Right cardiac atrium (tissue), 5 donors: ENCODE measurements at regions of chr9 and their contacts with region 1.

Region 1: DNA sequence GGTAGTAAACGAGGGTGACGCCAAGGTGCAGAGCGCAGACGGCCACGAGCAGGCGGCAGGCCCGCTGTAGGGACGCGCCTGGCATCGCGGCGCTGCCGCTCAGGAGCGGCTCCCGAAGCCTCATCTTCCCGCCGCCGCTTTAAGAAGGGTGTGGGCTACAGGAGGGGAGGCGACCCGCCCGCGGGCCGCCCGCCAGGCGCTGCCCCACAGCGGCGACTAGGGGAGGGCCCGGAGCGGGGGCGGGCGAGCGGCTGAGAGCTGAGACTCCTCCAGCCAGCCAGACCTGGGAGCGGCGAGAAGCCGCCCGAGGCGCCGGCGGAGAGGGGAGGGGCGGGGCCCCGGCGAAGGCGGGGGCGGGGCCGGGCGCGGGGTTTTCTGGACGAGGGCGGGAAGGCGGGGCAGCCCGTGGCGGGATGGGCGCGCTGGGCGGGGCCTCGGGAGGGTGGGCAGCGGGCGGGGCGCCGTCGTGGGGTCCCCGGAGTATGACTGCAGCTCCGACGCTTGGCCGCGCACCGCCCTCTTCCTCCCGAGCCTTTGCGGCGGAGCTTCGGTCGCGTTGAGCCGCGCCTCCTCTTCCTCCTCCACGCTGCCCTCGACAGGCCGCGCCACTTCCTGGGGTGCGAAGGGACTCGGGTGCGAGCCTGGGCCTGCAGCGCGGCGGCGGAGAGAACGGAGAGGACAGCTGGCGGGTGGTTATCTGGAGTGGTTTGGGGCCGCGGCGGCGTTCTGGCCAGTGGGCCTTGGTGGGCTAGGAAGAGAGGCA is at the start of gene B4GALT1:
- DNase-seq: peak; percentile 97 to 99 (median 98)
- ATAC-seq: peak; percentile 86 to 88
- H3K4me3 ChIP-seq: peak within 1 kb of the TSS; percentile 87
- H3K27ac ChIP-seq: peak within 1 kb of the TSS; percentile 99
- H3K4me1 ChIP-seq: peaks cover 25% of the 10 kb centered on the region
- H3K27me3 ChIP-seq: no peaks in the 10 kb centered on the region
- total RNA-seq, gene B4GALT1: 44.0 to 137 (median 58.3) TPM

Region 2: DNA sequence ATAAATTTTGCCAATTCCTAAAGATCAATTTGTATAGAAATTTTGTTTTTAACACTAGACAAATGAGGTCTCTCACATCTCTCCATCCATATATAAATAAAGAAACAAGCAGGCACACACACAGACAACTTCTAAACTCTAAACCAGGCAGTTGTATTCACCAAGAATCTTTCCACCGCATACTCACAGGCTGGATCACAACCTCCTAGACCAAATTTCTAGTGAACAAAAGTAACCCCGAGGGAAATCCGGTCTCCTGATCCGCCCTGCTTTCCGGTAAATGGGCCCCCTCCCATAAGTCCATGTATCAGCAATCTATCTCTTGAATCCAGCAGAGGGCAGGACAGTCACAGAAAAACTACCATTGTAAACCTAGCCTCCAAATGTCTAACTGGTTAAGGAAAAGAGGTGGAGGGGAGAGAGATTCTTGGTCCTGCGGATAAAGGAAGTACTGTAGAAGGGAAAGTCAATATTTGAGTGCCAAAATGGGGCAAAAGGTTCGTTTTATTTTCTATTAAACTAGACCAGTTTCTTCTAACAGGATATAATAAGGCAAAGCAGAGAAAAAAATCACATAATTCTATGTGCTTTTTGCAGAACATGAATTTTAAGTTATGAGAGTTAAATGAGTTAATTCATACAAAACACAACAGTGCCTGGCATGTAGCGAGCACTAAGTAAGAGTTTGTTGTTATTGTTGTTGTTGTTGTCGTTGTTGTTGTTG is 85.9 kb before region 1 on chr9:
- intact Hi-C with region 1: loop called in 2 of 4 experiments (anchors 5 kb)
- DNase-seq: peak in 2 of 3 donors; percentile 64 to 78
- ATAC-seq: peak; percentile 72 to 78
- H3K4me3 ChIP-seq: no peak overlapping the region
- H3K27ac ChIP-seq: no peak overlapping the region
- H3K4me1 ChIP-seq: no peaks in the 10 kb centered on the region
- H3K27me3 ChIP-seq: no peaks in the 10 kb centered on the region

Region 3: GRCh38 chr9:33107735-33108134 is 59.5 kb before region 1 on chr9:
- intact Hi-C with region 1: loop called in 1 of 4 experiments (anchors 2 kb)
- DNase-seq: no peak
- ATAC-seq: no peak
- H3K4me3 ChIP-seq: no peak overlapping the region
- H3K27ac ChIP-seq: peak overlapping the region; percentile 51
- H3K4me1 ChIP-seq: peaks cover 17% of the 10 kb centered on the region
- H3K27me3 ChIP-seq: no peaks in the 10 kb centered on the region

Region 4: GRCh38 chr9:33130508-33130911 is 36.7 kb before region 1 on chr9:
- intact Hi-C with region 1: loop called in 1 of 4 experiments (anchors 5 kb)
- DNase-seq: peak in 1 of 3 donors; percentile 18
- ATAC-seq: peak in 1 of 2 donors; percentile 20
- H3K4me3 ChIP-seq: no peak overlapping the region
- H3K27ac ChIP-seq: peak overlapping the region; percentile 48
- H3K4me1 ChIP-seq: peaks cover 42% of the 10 kb centered on the region
- H3K27me3 ChIP-seq: no peaks in the 10 kb centered on the region

Region 5: DNA sequence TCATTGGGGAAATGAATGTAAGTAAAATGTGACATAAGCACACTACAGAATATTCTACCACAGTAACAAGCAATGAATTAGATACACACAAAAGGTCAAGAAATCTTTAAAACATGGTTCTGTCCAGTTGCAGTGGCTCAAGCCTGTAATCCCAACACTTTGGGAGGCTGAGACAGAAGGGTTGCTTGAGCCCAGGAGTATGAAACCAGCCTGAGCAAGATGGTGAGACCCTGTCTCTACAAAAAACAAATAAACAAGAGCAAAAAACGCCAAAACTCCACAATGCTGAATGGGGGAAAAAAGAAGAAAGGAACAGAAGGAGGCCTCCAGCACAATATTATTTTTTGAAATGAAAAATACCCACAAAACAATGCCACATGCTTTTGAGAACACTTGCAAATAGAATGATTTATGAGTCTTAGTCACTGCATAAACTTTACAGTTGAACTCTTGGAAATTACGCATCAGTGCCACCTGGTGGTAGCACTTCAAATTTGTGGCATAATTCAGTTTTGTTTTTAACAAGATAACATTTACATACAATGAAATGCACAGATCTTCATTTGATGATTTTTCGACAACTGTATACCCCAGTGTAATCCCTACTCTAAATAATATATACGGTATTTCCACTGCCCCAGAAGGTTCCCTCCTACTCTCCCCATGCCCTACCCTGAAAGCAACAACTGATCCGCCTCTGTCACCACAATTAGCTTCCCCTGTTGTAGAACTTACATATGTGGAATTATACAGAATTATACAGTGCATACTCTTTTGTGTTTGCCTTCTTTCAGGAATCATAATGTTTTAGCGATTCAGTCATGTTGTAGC is 58.3 kb after region 1 on chr9:
- intact Hi-C with region 1: loop called in 1 of 4 experiments (anchors 5 kb)
- DNase-seq: peak in 1 of 3 donors; percentile 67
- ATAC-seq: peak; percentile 25 to 36
- H3K4me3 ChIP-seq: no peak overlapping the region
- H3K27ac ChIP-seq: no peak overlapping the region
- H3K4me1 ChIP-seq: no peaks in the 10 kb centered on the region
- H3K27me3 ChIP-seq: no peaks in the 10 kb centered on the region